ENCODE measurements at regions of chr2 and their contacts with region 1.

Region 1: GRCh38 chr2:68385220-68385906 is 20.3 kb downstream of the PLEK start:
- DNase-seq: peak; percentile 72
- H3K4me3 Mint-ChIP-seq: no peak overlapping the region
- H3K27ac Mint-ChIP-seq: peak overlapping the region; percentile 9
- H3K4me1 Mint-ChIP-seq: peaks cover 40% of the 10 kb centered on the region
- H3K27me3 Mint-ChIP-seq: peaks cover 5% of the 10 kb centered on the region

Region 2: GRCh38 chr2:67965246-67965645 is 420.1 kb before region 1 on chr2:
- CTCF ChIA-PET with region 1: no interaction called
- intact Hi-C with region 1: no loop called
- DNase-seq: no peak
- H3K4me3 Mint-ChIP-seq: no peak overlapping the region
- H3K27ac Mint-ChIP-seq: no peak overlapping the region
- H3K4me1 Mint-ChIP-seq: no peaks in the 10 kb centered on the region
- H3K27me3 Mint-ChIP-seq: peaks cover 8% of the 10 kb centered on the region

Region 3: GRCh38 chr2:68203587-68203986 is 181.8 kb before region 1 on chr2:
- CTCF ChIA-PET with region 1: no interaction called
- intact Hi-C with region 1: loop called (anchors 5 kb)
- DNase-seq: peak; percentile 16
- H3K4me3 Mint-ChIP-seq: peak overlapping the region; percentile 55
- H3K27ac Mint-ChIP-seq: peak overlapping the region; percentile 85
- H3K4me1 Mint-ChIP-seq: peaks cover 72% of the 10 kb centered on the region
- H3K27me3 Mint-ChIP-seq: no peaks in the 10 kb centered on the region

Region 4: GRCh38 chr2:68423966-68424650 is 38.7 kb after region 1 on chr2:
- CTCF ChIA-PET with region 1: no interaction called
- intact Hi-C with region 1: loop called (anchors 1 kb)
- DNase-seq: no peak
- H3K4me3 Mint-ChIP-seq: no peak overlapping the region
- H3K27ac Mint-ChIP-seq: no peak overlapping the region
- H3K4me1 Mint-ChIP-seq: no peaks in the 10 kb centered on the region
- H3K27me3 Mint-ChIP-seq: peaks cover 2% of the 10 kb centered on the region

Region 5: GRCh38 chr2:68653538-68653982 is 268.2 kb after region 1 on chr2:
- CTCF ChIA-PET with region 1: no interaction called
- intact Hi-C with region 1: loop called (anchors 5 kb)
- DNase-seq: peak; percentile 78
- H3K4me3 Mint-ChIP-seq: peak overlapping the region; percentile 0
- H3K27ac Mint-ChIP-seq: peak overlapping the region; percentile 63
- H3K4me1 Mint-ChIP-seq: peaks cover 43% of the 10 kb centered on the region
- H3K27me3 Mint-ChIP-seq: peaks cover 18% of the 10 kb centered on the region

Region 6: GRCh38 chr2:68837164-68837860 is 451.9 kb after region 1 on chr2:
- CTCF ChIA-PET with region 1: no interaction called
- intact Hi-C with region 1: loop called (anchors 1 kb)
- DNase-seq: peak; percentile 85
- H3K4me3 Mint-ChIP-seq: no peak overlapping the region
- H3K27ac Mint-ChIP-seq: peak overlapping the region; percentile 61
- H3K4me1 Mint-ChIP-seq: peaks cover 34% of the 10 kb centered on the region
- H3K27me3 Mint-ChIP-seq: no peaks in the 10 kb centered on the region

Region 7: DNA sequence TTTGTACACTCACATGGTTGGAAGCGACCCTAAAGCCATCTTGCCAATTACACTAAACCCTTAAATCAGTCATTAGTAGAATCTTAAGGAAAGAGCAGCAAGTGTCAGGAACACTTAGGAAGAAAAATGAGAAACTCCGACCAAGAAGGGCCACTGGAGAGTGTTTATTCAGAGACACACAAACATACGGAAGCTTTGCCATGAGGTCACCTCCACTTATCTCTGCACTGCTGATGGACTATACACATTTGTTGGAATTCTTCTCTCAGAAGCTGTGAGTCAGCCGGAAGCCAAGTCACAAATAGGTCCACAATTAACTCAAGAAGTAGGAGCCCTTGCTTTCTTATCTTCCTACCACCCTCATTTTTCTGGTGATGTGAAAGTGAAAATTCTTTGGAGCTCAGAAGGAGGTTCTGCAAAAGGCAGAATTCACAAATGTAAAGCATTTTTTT is 464.2 kb after region 1 on chr2:
- CTCF ChIA-PET with region 1: no interaction called
- intact Hi-C with region 1: no loop called
- DNase-seq: no peak
- H3K4me3 Mint-ChIP-seq: no peak overlapping the region
- H3K27ac Mint-ChIP-seq: no peak overlapping the region
- H3K4me1 Mint-ChIP-seq: no peaks in the 10 kb centered on the region
- H3K27me3 Mint-ChIP-seq: peaks cover 3% of the 10 kb centered on the region

Region 8: GRCh38 chr2:68994864-68995263 is 609.5 kb after region 1 on chr2:
- CTCF ChIA-PET with region 1: no interaction called
- intact Hi-C with region 1: no loop called
- DNase-seq: no peak
- H3K4me3 Mint-ChIP-seq: no peak overlapping the region
- H3K27ac Mint-ChIP-seq: no peak overlapping the region
- H3K4me1 Mint-ChIP-seq: no peaks in the 10 kb centered on the region
- H3K27me3 Mint-ChIP-seq: peaks cover 6% of the 10 kb centered on the region